ENCODE measurements at regions of chr6 and their contacts with region 1.

Region 1: GRCh38 chr6:158047127-158047518 is 65.5 kb downstream of the SYNJ2 start:
- DNase-seq: no peak
- ATAC-seq: no peak
- H3K4me3 ChIP-seq: no peak overlapping the region
- H3K27ac ChIP-seq: peak overlapping the region; percentile 5
- H3K4me1 ChIP-seq: peaks cover 79% of the 10 kb centered on the region
- H3K27me3 ChIP-seq: no peaks in the 10 kb centered on the region
- CTCF ChIP-seq: no peak
- EP300 ChIP-seq: no peak
- POLR2A ChIP-seq: no peak
- RAD21 ChIP-seq: no peak

Region 2: GRCh38 chr6:158057213-158057987 is 10.3 kb after region 1 on chr6:
- CTCF ChIA-PET with region 1: no interaction called
- POLR2A ChIA-PET with region 1: interaction called, 6 read pairs
- in situ Hi-C with region 1: no loop called
- intact Hi-C with region 1: loop called (anchors 1 kb)
- DNase-seq: no peak
- ATAC-seq: no peak
- H3K4me3 ChIP-seq: no peak overlapping the region
- H3K27ac ChIP-seq: no peak overlapping the region
- H3K4me1 ChIP-seq: peaks cover 8% of the 10 kb centered on the region; the same call in 1 of the 2 replicates
- H3K27me3 ChIP-seq: no peaks in the 10 kb centered on the region
- CTCF ChIP-seq: no peak
- EP300 ChIP-seq: no peak
- POLR2A ChIP-seq: no peak
- RAD21 ChIP-seq: no peak

Region 3: GRCh38 chr6:158213925-158214674 is 167.0 kb after region 1 on chr6:
- CTCF ChIA-PET with region 1: no interaction called
- POLR2A ChIA-PET with region 1: no interaction called
- in situ Hi-C with region 1: no loop called
- intact Hi-C with region 1: no loop called
- DNase-seq: peak; percentile 84
- ATAC-seq: peak; percentile 100
- H3K4me3 ChIP-seq: no peak overlapping the region
- H3K27ac ChIP-seq: no peak overlapping the region
- H3K4me1 ChIP-seq: no peaks in the 10 kb centered on the region
- H3K27me3 ChIP-seq: no peaks in the 10 kb centered on the region
- CTCF ChIP-seq: peak; percentile 95
- EP300 ChIP-seq: no peak
- POLR2A ChIP-seq: no peak
- RAD21 ChIP-seq: peak; percentile 92